Ascending aorta (tissue), 2 donors: ENCODE measurements at regions of chrX and their contacts with region 1.

Region 1: DNA sequence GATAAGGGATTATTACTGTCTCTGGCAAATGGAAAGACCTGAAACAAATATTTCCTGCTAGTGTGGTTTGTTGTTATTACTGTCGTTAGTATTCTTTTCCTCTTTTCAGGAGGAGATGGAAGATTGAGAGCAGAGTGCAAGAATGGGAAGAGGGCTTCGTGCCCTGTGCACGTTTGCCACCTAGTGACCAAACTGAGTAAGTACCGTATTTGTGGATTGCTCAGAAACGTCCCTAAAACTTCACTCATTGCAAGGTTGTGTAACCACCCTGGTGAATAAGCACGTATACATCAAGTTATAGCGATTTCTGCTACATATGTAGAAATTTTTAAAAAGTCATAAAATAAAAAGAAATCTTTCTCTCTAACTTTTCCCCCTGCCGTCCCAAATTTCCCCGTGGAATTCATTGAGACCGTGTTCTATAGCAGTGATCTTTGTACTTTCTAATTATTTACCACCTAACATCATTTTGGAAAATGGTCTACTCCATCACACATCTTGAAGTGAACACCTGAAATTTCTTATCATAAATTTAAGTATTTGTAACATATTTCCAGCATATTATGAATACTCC is 24.3 kb downstream of the LINC00632 start:
- DNase-seq: no peak
- H3K4me3 ChIP-seq: no peak overlapping the region
- H3K27ac ChIP-seq: no peak overlapping the region
- H3K4me1 ChIP-seq: no peaks in the 10 kb centered on the region
- H3K27me3 ChIP-seq: no peaks in the 10 kb centered on the region
- CTCF ChIP-seq: peak; percentile 37 to 78 (median 77)

Region 2: GRCh38 chrX:140091125-140091886 is 642.5 kb before region 1 on chrX:
- intact Hi-C with region 1: no loop called
- DNase-seq: no peak
- H3K4me3 ChIP-seq: peak overlapping the region; percentile 50 to 58
- H3K27ac ChIP-seq: no peak overlapping the region
- H3K4me1 ChIP-seq: no peaks in the 10 kb centered on the region
- H3K27me3 ChIP-seq: no peaks in the 10 kb centered on the region
- CTCF ChIP-seq: no peak

Region 3: DNA sequence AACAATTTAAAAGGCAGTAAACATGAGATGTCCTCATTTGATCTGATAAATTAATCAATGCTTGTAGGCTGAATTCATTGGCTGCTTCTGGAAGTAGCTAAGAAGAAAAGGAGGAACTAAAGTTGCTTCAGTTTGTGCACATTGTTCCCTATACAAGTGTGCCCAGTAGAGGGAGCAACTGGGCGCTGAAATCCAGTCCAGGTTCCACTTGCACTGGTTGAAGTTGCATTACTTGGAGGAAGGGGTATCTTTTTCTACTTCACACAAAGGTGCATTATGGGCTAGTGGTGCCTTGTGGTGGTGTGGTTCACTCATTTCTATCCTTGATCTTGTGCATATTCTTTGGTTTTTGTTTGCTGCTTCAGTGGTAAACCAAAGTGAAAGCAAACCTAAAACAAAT is 161.1 kb before region 1 on chrX:
- intact Hi-C with region 1: loop called (anchors 10 kb)
- DNase-seq: no peak
- H3K4me3 ChIP-seq: no peak overlapping the region
- H3K27ac ChIP-seq: no peak overlapping the region
- H3K4me1 ChIP-seq: no peaks in the 10 kb centered on the region
- H3K27me3 ChIP-seq: no peaks in the 10 kb centered on the region
- CTCF ChIP-seq: peak in 2 of 3 experiments; percentile 20 to 52

Region 4: DNA sequence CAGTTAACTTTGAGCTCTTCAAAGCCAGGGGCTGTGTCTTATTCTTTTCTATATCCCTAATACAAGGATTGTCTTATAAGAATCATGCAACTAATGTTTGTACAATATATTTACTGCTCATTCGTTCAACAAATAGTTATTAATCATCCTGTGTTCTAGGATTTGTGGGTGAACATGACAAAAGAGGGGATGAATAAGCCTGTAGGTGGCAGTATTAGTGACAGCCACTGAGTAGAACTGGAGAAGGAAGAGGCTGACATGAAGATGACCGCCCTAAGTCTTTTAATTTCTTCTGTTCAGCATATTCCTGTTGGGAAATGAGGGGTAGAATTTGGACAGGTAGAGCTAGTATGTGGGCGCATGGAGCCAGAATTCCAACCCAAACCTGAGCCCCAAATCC is 36.2 kb before region 1 on chrX:
- intact Hi-C with region 1: loop called (anchors 5 kb)
- DNase-seq: no peak
- H3K4me3 ChIP-seq: no peak overlapping the region
- H3K27ac ChIP-seq: no peak overlapping the region
- H3K4me1 ChIP-seq: no peaks in the 10 kb centered on the region
- H3K27me3 ChIP-seq: no peaks in the 10 kb centered on the region
- CTCF ChIP-seq: no peak